HEK293 (cell line): ENCODE measurements at regions of chr2 and their contacts with region 1.

Region 1: DNA sequence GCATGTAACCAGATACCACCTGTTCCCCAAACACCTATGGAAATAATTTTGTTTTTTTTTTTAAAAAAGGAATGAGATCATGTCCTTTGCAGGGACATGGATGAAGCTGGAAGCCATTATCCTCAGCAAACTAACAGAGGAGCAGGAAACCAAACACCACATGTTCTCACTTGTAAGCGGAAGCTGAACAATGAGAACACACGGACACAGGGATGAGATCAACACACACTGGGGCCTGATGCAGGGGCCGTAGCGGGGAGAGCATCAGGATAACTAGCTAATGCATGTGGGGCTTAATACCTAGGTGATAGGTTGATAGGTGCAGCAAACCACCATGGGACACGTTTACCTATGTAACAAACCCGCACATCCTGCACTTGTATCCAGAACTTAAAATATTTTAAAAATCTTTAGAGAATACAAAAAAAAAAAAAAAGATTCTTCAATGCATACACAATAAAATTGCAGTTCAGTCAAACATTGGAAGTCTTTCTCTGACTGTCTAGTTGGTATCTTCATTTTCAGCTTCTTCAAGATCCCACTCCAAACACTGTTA is 11.6 kb upstream of the CASP10 start:
- H3K4me3 ChIP-seq: no peak overlapping the region
- H3K27ac ChIP-seq: no peak overlapping the region
- H3K4me1 ChIP-seq: no peaks in the 10 kb centered on the region
- CTCF ChIP-seq: no peak

Region 2: GRCh38 chr2:200901459-200902072 is 269.8 kb before region 1 on chr2:
- CTCF ChIA-PET with region 1: interaction called, 41 read pairs
- POLR2A ChIA-PET with region 1: no interaction called
- H3K4me3 ChIP-seq: no peak overlapping the region
- H3K27ac ChIP-seq: no peak overlapping the region
- H3K4me1 ChIP-seq: no peaks in the 10 kb centered on the region
- CTCF ChIP-seq: peak; percentile 78

Region 3: DNA sequence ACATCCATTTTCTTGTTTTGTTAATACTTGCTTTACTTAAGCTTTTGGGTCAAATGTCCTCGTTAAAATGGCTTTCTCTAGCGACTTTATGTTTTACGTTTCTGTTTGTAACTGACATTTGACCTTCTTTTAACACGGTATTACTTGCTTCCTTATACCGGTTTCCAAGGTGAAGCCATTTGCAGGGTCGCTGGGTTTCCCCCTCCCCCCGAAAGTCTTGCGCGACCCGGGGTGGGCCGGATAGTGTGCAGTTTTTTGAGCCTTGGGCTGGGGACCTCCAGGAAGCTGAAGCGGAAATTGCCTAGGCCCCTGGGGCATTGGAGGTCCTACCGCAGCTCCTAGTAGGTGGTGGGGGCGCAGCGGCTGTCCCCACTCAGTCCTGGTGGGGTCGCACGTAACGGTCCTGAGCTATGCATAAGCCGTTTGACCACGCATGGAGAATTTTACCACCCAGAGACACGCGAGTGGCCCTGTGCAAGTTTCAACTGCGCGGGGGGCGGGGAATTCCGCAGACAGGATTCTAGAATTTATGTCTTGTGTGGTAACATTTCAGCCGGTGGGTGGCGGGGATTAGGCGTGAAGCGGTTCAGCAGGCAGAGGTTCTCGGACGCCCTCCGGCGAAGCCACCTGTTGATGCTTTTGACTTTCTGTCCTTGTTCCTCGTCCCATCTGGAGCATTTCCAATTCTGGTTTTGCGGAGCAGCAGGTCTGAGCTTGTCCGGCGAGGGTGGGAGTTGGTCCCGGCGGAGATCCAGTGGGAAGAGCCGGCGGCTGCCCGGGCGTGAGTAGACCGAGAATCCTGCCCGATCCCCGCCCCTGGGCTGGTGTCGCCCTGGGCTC is 53.0 kb before region 1 on chr2:
- CTCF ChIA-PET with region 1: interaction called, 11 read pairs
- POLR2A ChIA-PET with region 1: no interaction called
- H3K4me3 ChIP-seq: peak overlapping the region; percentile 40
- H3K27ac ChIP-seq: peak overlapping the region; percentile 95
- H3K4me1 ChIP-seq: peaks cover 5% of the 10 kb centered on the region; the same call in 1 of the 2 replicates
- CTCF ChIP-seq: peak; percentile 94

Region 4: DNA sequence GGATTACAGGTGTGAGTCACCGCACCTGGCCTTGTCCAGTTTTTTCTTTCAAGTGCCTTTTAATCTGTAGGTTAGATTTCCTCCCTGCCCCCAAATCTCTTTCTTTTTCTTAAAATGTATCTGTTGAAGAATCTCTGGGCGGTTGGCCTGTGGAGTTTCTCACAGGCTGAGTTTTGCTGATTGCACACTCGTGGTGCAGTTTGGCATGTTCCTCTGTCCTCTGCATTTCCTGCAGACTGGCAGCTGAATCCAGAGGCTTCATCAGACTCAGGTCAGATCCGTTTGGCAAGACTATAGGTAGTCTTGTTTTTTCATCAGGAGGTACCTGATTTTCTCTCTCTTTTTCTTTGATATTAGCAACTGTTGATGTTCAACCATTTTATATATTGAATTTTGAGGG is 17.1 kb after region 1 on chr2:
- CTCF ChIA-PET with region 1: no interaction called
- POLR2A ChIA-PET with region 1: no interaction called
- H3K4me3 ChIP-seq: no peak overlapping the region
- H3K27ac ChIP-seq: no peak overlapping the region
- H3K4me1 ChIP-seq: no peaks in the 10 kb centered on the region
- CTCF ChIP-seq: no peak